Calu3 (cell line): ENCODE measurements at regions of chr12 and their contacts with region 1.

Region 1: GRCh38 chr12:76649099-76649498 is 89.5 kb upstream of the OSBPL8 start:
- DNase-seq: no peak
- H3K4me3 Mint-ChIP-seq: no peak overlapping the region
- H3K27ac Mint-ChIP-seq: no peak overlapping the region
- H3K4me1 Mint-ChIP-seq: no peaks in the 10 kb centered on the region
- H3K27me3 Mint-ChIP-seq: no peaks in the 10 kb centered on the region
- CTCF ChIP-seq: no peak

Region 2: GRCh38 chr12:76685246-76685678 is 36.2 kb after region 1 on chr12:
- CTCF ChIA-PET with region 1: interaction called, 4 read pairs
- intact Hi-C with region 1: loop called (anchors 1 kb)
- DNase-seq: no peak
- H3K4me3 Mint-ChIP-seq: no peak overlapping the region
- H3K27ac Mint-ChIP-seq: no peak overlapping the region
- H3K4me1 Mint-ChIP-seq: no peaks in the 10 kb centered on the region
- H3K27me3 Mint-ChIP-seq: no peaks in the 10 kb centered on the region
- CTCF ChIP-seq: no peak